ENCODE measurements at regions of chr19 and their contacts with region 1.

Region 1: DNA sequence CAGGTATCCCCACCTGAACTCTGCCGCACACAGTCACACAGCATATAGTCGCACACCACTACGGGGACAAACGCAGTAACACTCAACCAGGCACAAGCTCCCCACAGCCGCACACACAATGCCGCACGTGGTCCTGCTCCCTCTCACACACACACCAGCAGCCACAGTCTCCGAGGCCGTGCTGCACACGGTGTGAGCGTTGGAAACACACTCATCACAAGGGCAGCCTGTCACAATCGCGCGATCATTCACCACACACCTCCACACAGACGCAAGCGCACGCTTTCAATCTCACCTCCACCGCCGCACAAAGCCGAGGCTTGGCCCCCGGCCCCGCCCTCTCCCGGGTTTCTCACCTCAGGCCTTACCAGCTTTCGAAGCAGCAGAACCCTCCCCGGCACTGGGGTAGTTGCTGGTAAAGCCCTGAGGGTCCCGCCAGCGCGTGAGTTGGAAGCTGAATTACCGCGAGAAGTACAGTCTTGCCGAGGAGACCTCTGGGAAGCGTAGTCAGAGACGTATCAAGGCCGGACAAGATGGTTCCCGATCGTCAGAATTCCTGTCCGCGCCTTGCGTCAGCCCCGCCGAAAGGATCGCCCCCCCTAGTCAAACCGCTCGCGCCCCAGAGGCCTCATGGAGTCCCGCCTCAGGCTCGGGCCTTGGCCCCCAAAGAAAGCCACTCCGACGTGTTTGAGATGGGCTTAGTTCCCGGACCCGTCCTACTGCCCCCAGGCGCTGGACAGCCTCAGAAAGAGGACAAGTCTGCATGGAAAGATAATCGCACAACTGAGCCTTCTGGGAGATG is at the start of gene ZNF566:
- DNase-seq: peak; percentile 81
- ATAC-seq: peak; percentile 92
- H3K4me3 Mint-ChIP-seq: peak within 1 kb of the TSS; percentile 98
- H3K27ac Mint-ChIP-seq: peak within 1 kb of the TSS; percentile 99
- H3K4me1 Mint-ChIP-seq: peaks cover 46% of the 10 kb centered on the region
- H3K27me3 Mint-ChIP-seq: no peaks in the 10 kb centered on the region
- CTCF ChIP-seq: no peak
- total RNA-seq, gene ZNF566: 14.1 and 16.6 TPM in 2 replicates

Region 2: DNA sequence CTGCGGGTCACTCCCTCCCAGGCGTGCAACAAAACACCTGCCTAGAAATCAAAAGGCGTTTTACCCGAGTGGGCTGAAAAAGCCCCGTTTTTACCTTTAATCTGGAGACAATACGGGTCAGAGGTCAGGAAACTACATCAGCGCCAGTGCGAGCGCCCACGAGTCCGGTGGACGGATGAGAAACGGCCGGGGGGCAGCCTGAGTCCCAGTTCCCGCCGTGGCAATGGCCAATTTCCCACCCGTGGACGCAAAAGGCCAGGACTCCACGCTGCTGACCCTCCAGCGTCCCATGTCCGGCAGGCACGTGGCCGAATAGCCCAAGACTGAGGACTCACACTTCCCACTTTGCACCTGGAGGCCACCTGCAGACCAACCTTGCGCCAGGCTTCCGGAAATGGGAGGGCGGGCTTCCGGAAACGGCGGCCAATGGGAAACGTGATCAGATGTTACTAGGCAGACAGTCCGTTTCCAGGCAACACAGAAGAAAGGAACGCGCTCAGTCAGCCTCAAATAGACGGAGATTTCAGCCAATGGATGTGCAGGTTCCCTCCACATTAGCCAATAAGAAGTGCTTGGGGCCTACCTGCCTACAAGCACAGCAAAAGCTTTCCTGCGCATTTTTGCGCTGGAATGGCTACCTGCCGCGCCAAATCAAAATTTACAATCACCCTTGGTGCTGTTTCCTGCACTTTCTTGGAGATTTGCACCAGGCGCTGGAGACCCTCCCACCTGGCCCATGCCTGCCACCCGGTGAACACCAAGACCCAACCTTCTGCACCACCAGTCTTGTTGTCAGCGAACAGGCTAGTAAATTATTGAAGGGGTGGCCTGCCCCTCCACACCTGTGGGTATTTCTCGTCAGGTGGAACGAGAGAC is 157.7 kb before region 1 on chr19:
- CTCF ChIA-PET with region 1: no interaction called
- POLR2A ChIA-PET with region 1: no interaction called
- intact Hi-C with region 1: loop called (anchors 1 kb)
- DNase-seq: peak; percentile 78
- ATAC-seq: peak; percentile 99
- H3K4me3 Mint-ChIP-seq: peak overlapping the region; percentile 86
- H3K27ac Mint-ChIP-seq: peak overlapping the region; percentile 76
- H3K4me1 Mint-ChIP-seq: peaks cover 26% of the 10 kb centered on the region
- H3K27me3 Mint-ChIP-seq: no peaks in the 10 kb centered on the region
- CTCF ChIP-seq: no peak

Region 3: GRCh38 chr19:36418287-36419001 is 70.9 kb before region 1 on chr19 and contains the start of gene ZFP82:
- CTCF ChIA-PET with region 1: no interaction called
- POLR2A ChIA-PET with region 1: interaction called, 14 read pairs
- intact Hi-C with region 1: loop called (anchors 1 kb)
- DNase-seq: peak; percentile 87
- ATAC-seq: peak; percentile 95
- H3K4me3 Mint-ChIP-seq: peak within 1 kb of the TSS; percentile 97
- H3K27ac Mint-ChIP-seq: peak within 1 kb of the TSS; percentile 97
- H3K4me1 Mint-ChIP-seq: peaks cover 30% of the 10 kb centered on the region
- H3K27me3 Mint-ChIP-seq: peaks cover 15% of the 10 kb centered on the region
- CTCF ChIP-seq: no peak
- total RNA-seq, gene ZFP82: 10.4 and 11.4 TPM in 2 replicates

Region 4: DNA sequence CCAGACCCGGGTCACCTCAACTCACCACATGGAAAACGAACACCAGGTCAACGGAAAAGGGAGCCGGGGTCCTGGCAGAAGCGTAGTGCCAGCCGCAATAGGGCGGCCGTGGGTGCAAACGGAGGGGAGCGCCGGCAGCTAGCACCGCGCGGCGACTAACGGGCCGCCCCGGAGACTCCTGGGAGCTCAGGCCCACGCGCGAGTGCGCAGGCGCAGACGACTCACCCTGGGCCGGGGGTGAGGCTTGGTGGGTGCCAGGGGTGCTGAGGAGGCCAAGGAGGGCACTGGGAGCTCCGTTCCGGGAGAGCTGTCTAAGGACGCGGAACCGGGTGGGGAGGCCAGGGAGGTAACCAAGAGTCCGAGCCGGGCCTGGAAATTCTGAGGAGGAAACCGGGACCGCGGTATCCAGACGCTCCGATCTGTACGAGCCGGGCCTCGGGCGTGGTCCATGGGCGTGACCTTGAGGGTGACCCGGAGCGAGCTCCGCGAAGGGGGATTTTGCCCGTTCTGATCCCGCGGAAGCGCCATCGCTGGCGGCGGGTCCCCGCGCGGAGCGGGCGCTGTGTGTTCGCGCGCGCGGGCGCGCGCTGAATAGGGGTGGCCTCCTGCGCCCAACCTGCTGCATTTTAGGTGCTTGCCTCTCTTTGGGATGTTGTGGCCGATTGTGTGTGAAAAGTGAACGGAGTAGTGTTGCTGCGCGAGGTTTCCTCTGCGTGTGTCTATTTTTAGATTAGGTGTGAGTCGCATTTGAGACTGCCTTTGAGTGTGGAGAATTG is 116.0 kb after region 1 on chr19 and contains the start of gene ZNF382:
- CTCF ChIA-PET with region 1: no interaction called
- POLR2A ChIA-PET with region 1: interaction called, 12 read pairs
- intact Hi-C with region 1: loop called (anchors 1 kb)
- DNase-seq: peak; percentile 85
- ATAC-seq: peak; percentile 80
- H3K4me3 Mint-ChIP-seq: peak within 1 kb of the TSS; percentile 97
- H3K27ac Mint-ChIP-seq: peak within 1 kb of the TSS; percentile 97
- H3K4me1 Mint-ChIP-seq: peaks cover 28% of the 10 kb centered on the region
- H3K27me3 Mint-ChIP-seq: no peaks in the 10 kb centered on the region
- CTCF ChIP-seq: no peak
- total RNA-seq, gene ZNF382: 11.5 and 14.4 TPM in 2 replicates

Region 5: DNA sequence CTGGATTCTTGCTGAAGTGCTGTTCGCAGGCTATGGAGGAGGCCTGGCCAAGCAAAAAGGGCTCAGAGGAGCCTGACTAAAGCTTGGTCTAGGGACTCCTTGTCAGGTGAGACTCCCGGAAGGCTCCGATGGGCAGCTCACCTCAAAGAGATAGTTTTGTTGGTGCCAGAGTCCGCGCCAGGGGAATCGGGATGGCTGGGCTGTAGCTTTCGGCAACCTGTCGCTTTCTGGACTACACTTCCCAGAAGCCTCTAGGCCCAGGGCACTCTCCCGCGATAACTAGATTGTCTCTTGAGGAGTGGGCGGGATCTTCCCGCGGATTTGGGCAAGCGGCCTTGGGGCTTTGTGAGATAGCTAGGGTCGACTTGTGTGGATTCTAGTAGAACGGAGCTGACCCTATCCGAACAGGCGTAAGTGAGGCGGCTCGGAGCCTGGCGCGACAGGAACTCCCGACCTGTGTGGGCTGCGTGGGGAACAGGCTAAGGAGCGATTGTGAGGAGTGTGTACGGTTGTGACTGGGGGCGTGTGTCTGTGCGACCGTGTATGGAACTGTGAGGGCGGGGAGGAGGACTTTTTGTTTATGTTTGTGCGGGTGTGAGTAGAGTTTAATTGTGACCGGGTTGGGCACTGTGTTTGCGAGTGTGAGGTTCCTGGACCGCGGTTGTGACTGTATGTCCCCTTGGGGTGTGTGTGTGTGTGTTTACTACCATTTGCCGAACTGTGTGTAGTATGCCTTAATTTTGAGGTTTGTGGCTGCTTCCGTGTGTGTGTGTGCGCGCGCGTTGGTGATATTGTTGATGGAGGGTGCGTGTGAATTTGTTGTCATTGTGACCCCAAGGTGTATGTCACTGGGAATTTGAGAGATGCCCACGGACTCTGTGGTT is 361.5 kb after region 1 on chr19 and contains the start of gene ZNF345:
- CTCF ChIA-PET with region 1: no interaction called
- POLR2A ChIA-PET with region 1: interaction called, 14 read pairs
- intact Hi-C with region 1: loop called (anchors 1 kb)
- DNase-seq: peak; percentile 71
- ATAC-seq: peak; percentile 83
- H3K4me3 Mint-ChIP-seq: no peak within 1 kb of the TSS
- H3K27ac Mint-ChIP-seq: no peak within 1 kb of the TSS
- H3K4me1 Mint-ChIP-seq: peaks cover 9% of the 10 kb centered on the region
- H3K27me3 Mint-ChIP-seq: no peaks in the 10 kb centered on the region
- CTCF ChIP-seq: no peak
- total RNA-seq, gene ZNF345: 7.8 and 9.5 TPM in 2 replicates

Region 6: DNA sequence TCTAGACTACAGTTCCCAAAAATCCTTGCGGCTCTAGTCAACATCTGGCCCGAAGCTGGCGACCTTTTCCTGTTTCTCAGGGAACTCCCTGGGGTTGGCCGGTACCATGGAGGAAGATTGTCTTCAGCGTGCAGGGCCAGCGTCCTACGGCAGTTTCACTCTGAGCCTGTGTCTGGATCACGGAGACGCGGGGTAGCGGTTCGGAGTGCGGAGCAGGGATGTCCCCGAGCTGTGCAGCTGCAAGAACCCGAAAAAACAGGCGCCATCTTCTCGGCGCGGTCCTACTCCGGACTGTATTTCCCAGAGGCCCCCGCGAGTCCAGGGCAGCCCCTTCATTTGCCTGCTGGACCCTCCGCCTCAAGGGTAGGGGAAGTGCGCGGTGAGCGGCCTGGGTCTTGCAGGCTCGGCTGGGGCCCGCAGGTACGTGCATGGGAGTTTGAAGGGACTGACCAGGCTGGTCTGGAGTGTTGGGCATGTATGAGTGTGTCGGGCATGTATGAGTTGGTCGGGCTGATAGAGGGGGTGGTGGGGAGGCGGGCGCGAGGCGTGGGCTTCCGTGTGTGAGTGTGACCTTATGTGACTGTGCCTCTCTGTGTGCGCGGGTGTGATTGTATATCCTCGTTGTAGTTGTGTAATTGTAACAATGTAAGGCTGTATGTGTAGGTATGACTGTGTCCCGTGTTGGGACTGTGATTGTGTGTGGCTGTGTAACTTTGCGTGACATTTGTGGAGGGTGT is 728.7 kb after region 1 on chr19 and contains the start of gene ZNF383:
- CTCF ChIA-PET with region 1: no interaction called
- POLR2A ChIA-PET with region 1: interaction called, 4 read pairs
- intact Hi-C with region 1: loop called (anchors 1 kb)
- DNase-seq: peak; percentile 81
- ATAC-seq: peak; percentile 89
- H3K4me3 Mint-ChIP-seq: peak within 1 kb of the TSS; percentile 98
- H3K27ac Mint-ChIP-seq: peak within 1 kb of the TSS; percentile 99
- H3K4me1 Mint-ChIP-seq: peaks cover 26% of the 10 kb centered on the region
- H3K27me3 Mint-ChIP-seq: no peaks in the 10 kb centered on the region
- CTCF ChIP-seq: no peak
- total RNA-seq, gene ZNF383: 19.9 and 25.5 TPM in 2 replicates

Measured in activated B cell treated with CpG ODN at 0.5 μM for 24 hours (primary cell).